H1 (cell line): ENCODE measurements at regions of chr1 and their contacts with region 1.

Region 1: GRCh38 chr1:84668185-84668584 is 22.1 kb downstream of the SSX2IP start:
- DNase-seq: no peak
- H3K4me3 ChIP-seq: no peak overlapping the region
- H3K27ac ChIP-seq: no peak overlapping the region
- H3K4me1 ChIP-seq: peaks cover 0 to 2% (median 0%) of the 10 kb centered on the region in 4 experiments; a peak in 1 of 7 replicates
- H3K27me3 ChIP-seq: peaks cover 0 to 1% (median 0%) of the 10 kb centered on the region in 4 experiments; a peak in 1 of 7 replicates
- CTCF ChIP-seq: peak in 2 of 3 experiments; percentile 44 to 47; a peak in 2 of 4 replicates
- EP300 ChIP-seq: no peak
- POLR2A ChIP-seq: no peak
- RAD21 ChIP-seq: peak; percentile 64 to 76

Region 2: DNA sequence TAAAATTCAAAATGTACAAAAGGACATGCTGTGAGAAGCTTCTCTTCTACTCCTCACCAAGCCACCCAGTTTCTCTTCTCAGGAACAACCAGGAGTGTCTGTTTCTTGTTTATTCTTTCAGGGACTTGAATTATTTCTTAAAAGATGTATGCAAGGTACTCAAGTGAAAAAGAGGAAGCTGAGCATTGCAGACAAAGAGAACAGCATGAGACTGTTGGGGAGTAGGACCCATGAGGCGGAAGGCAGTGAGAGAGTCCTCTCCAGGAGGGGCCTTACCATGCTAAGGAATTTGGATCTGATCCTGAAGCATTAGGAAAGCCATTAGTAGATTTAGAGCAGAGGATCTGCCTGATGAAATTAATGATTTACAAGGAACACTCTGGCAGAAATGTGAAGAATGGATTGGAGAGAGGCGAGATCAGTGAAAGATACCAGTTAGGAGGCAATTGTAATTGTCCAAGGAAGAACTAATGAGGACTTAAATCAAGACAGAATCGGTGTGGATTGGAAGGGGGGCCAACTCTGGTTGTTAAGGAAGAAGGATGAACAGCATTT is 36.8 kb after region 1 on chr1:
- CTCF ChIA-PET with region 1: interaction called, 10 read pairs
- POLR2A ChIA-PET with region 1: no interaction called
- DNase-seq: no peak
- H3K4me3 ChIP-seq: no peak overlapping the region
- H3K27ac ChIP-seq: no peak overlapping the region
- H3K4me1 ChIP-seq: peaks cover 0 to 7% (median 1%) of the 10 kb centered on the region in 4 experiments; a peak in 6 of 7 replicates
- H3K27me3 ChIP-seq: no peaks in the 10 kb centered on the region
- CTCF ChIP-seq: no peak
- EP300 ChIP-seq: no peak
- POLR2A ChIP-seq: no peak
- RAD21 ChIP-seq: no peak

Region 3: GRCh38 chr1:84800090-84801073 is 132.2 kb after region 1 on chr1:
- CTCF ChIA-PET with region 1: no interaction called
- POLR2A ChIA-PET with region 1: no interaction called
- DNase-seq: no peak
- H3K4me3 ChIP-seq: no peak overlapping the region
- H3K27ac ChIP-seq: no peak overlapping the region
- H3K4me1 ChIP-seq: no peaks in the 10 kb centered on the region
- H3K27me3 ChIP-seq: no peaks in the 10 kb centered on the region; a peak in 1 of 7 replicates
- CTCF ChIP-seq: no peak
- EP300 ChIP-seq: no peak
- POLR2A ChIP-seq: no peak
- RAD21 ChIP-seq: no peak